Activated T-helper 1 cell treated with anti-CD3 and anti-CD28 coated beads, Interleukin-12 subunit alpha, Interleukin-12 subunit beta, Interleukin-2, Interleukin-4 antibody, amounts not matched to agents 30 ng/mL and 10 ng/mL and 1 ng/mL, durations not matched to agents 14 hours and 24 hours and 36 hours (primary cell): ENCODE measurements at regions of chr16 and their contacts with region 1.

Region 1: DNA sequence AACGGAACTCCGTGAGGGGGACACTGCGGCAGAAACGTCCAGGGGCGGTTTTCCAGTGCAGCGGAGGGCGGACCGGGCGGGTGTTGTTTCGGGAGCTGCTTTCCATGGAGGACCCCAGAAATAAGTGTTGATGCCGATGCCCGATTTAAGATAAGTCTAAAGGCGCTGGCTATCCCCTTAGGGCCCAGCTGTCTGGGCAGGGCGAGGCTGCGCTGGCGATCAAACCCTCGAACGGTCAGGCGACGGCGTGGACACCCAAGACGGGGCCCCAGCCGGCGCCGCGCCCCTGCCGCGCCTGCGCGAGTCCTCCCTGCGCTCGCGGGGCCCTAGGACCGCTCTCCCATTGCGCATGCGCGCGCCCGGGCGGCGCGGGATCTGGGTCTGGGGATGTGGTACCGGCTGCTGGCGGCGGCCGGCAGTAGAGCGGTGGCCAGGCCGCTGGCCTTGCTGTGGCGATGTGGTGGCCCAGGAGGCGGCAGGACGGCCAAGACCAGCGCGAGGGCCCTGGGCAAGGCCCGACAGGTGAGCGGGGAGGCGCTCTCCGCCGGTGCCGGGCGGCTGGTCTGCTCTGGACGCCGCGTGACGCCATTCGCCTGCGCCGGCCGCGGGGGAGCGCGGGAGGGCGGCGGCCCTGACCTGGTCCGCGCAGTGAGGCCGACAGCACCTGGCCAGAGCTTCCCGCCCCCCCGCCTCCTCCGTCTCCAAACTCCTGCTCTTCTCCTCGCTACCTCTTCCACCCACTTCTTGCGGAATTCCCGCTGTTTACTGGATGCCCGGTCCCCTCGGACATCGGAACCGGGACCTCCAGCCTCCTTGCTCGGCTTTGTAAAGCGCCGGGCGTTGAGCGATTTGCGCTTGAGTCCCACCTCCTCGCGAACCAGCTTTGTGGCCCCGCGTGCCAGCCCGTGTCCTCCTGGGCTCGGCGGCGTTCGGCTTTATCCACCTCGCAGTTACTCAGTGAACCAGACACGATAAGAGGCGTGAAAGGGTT is 24.0 kb downstream of the DEF8 start:
- DNase-seq: peak; percentile 92
- H3K4me3 Mint-ChIP-seq: peak overlapping the region; percentile 99
- H3K27ac Mint-ChIP-seq: peak overlapping the region; percentile 94
- H3K4me1 Mint-ChIP-seq: peaks cover 29% of the 10 kb centered on the region
- H3K27me3 Mint-ChIP-seq: peaks cover 2% of the 10 kb centered on the region

Region 2: DNA sequence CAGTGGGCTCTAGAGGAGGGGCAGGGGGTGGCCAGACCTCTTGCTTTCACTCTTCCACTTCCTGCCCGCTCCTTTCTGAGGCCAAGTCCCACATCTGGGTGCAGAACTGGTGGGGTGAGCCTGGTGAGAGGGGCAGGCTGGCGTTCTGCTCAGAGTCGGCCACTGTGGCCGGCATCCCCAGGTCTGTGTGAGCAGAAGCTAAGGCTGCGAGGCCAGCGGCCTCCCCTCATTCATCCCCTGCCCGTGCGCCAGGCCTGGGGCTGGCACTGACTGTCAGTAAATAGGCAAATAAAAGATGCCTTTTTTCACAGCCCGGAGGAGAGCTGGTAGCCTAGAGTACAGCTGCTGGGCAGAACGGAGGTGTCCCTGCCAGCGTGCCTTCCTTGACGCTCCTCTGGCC is 22.8 kb before region 1 on chr16:
- intact Hi-C with region 1: loop called (anchors 2 kb)
- DNase-seq: no peak
- H3K4me3 Mint-ChIP-seq: peak overlapping the region; percentile 84
- H3K27ac Mint-ChIP-seq: no peak overlapping the region
- H3K4me1 Mint-ChIP-seq: no peaks in the 10 kb centered on the region
- H3K27me3 Mint-ChIP-seq: peaks cover 32% of the 10 kb centered on the region

Region 3: DNA sequence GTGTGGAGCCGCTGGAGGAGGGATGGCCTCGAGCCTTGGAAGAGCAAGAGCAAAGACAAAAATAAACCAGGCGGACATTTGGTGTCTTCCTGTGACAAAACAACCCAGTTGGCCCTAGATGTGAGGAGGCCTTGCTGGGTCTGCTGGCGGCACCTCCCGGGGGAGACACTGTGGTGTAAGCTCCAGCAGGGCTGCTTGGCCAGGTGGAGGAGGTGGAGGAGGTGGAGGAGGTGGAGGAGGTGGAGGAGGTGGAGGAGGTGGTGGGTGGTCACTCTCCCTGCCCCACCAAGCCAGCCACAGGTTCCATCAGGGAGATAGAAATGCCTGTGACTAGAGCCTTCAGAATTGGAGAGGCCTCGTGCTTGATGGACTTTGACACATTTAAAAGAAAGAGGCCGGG is 14.6 kb after region 1 on chr16:
- intact Hi-C with region 1: no loop called
- DNase-seq: no peak
- H3K4me3 Mint-ChIP-seq: no peak overlapping the region
- H3K27ac Mint-ChIP-seq: peak overlapping the region; percentile 27
- H3K4me1 Mint-ChIP-seq: no peaks in the 10 kb centered on the region
- H3K27me3 Mint-ChIP-seq: no peaks in the 10 kb centered on the region